BJ (cell line): ENCODE measurements at regions of chr2 and their contacts with region 1.

Region 1: GRCh38 chr2:9333591-9334171 is 89.6 kb downstream of the ITGB1BP1 start:
- DNase-seq: peak; percentile 28
- H3K4me3 ChIP-seq: no peak overlapping the region
- H3K27me3 ChIP-seq: no peaks in the 10 kb centered on the region
- CTCF ChIP-seq: peak; percentile 80

Region 2: DNA sequence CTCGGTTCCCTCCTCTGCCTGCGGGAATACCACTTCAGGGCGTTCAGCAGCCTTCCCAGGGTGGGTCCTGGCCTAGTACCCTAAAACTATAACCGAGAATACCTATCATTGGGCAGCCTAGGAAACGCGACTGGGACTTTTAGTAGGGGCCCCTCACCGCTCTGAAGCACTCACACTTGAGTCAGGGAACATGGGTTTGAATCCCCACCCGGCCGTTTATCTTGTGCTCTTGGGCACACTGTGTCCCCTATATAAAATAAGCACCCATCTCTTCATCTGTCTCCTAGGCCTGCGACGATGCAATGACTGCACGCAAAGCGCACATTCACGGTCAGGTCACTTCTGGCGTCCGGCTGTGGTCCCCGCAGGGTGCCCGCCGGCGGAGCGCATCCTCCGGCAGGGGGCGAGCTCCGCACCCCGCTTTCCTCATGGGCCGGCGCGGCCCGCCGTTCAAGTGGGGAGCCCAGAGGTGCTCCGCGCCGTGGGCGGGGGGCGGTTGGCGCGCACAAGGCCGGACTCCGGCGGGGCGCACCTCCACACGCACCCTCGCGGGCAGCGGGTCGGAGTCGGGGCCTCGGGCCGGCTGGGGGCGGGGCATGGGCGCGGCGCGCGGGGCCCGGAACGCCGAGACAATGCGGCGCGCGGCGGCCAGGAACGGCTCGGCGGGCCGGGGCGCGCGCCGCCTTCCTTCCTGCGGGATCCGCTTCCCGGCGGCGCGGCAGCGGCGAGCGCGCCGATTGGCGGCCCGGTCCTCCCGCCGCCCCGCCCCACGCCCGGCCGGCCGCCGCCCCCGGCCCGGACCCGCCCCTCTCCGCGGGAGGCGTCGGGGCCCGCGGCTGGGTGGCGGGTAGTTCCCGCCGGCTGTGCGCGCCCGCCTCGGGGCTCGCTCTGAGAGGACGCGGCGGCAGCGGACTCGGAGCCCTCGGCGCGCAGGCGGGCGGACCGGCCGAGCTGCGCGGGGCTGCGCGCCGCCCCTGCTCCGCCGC is 127.4 kb before region 1 on chr2 and contains the start of gene ASAP2:
- CTCF ChIA-PET with region 1: interaction called, 11 read pairs
- POLR2A ChIA-PET with region 1: no interaction called
- DNase-seq: no peak
- H3K4me3 ChIP-seq: peak within 1 kb of the TSS; percentile 85
- H3K27me3 ChIP-seq: no peaks in the 10 kb centered on the region
- CTCF ChIP-seq: peak; percentile 76
- polyA plus RNA-seq, gene ASAP2: 14.1 and 18.2 TPM in 2 replicates

Region 3: GRCh38 chr2:9287400-9288043 is 46.2 kb before region 1 on chr2:
- CTCF ChIA-PET with region 1: interaction called, 11 read pairs
- POLR2A ChIA-PET with region 1: interaction called, 3 read pairs
- DNase-seq: peak; percentile 97
- H3K4me3 ChIP-seq: no peak overlapping the region
- H3K27me3 ChIP-seq: no peaks in the 10 kb centered on the region
- CTCF ChIP-seq: 0 out of 2 replicates have a peak, but pooled peaks have one; percentile 20

Region 4: DNA sequence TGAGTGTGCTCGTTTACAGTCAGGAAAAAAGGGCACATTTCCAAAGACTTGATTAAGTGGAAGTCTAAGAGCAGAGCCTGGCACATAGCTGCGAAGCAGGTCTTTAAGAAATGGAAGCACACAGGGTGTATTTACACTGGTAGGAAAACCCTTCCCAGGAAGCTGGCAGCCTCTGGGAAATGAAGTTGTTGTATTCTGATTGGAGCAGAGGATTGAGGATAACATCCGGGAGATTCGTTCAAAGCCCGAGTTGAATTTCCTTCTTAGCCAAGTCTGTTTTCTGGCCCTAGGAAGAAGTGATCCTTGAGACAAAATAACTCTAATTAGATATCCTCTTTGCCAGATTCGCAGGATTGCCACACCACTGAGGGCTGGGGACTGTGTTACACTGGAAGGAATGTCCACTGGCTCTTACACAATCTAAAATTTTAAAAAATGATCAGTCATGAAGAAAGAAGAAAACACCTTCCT is 13.8 kb after region 1 on chr2:
- CTCF ChIA-PET with region 1: interaction called, 3 read pairs
- POLR2A ChIA-PET with region 1: interaction called, 16 read pairs
- DNase-seq: no peak
- H3K4me3 ChIP-seq: no peak overlapping the region
- H3K27me3 ChIP-seq: no peaks in the 10 kb centered on the region
- CTCF ChIP-seq: no peak

Region 5: DNA sequence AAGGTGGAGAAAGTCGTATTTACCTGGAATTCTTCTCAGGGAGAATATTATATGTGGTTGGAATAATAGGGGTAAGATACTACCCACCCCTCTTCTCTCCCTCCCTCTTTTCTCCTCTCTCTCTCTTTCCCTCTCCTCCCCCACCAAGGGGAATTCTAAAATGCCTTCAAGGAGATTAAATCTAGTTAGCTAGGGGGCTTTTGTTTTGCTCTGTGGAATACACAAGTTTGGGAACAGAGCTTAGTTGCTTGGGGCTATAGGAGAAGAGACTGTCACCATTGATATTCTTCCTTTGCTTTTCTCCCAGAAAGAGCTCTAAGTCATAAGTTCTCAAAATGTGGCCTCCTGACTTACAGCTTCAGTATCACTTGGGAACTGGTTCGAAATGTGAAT is 544.0 kb after region 1 on chr2:
- CTCF ChIA-PET with region 1: no interaction called
- POLR2A ChIA-PET with region 1: no interaction called
- DNase-seq: no peak
- H3K4me3 ChIP-seq: no peak overlapping the region
- H3K27me3 ChIP-seq: no peaks in the 10 kb centered on the region
- CTCF ChIP-seq: no peak

Region 6: DNA sequence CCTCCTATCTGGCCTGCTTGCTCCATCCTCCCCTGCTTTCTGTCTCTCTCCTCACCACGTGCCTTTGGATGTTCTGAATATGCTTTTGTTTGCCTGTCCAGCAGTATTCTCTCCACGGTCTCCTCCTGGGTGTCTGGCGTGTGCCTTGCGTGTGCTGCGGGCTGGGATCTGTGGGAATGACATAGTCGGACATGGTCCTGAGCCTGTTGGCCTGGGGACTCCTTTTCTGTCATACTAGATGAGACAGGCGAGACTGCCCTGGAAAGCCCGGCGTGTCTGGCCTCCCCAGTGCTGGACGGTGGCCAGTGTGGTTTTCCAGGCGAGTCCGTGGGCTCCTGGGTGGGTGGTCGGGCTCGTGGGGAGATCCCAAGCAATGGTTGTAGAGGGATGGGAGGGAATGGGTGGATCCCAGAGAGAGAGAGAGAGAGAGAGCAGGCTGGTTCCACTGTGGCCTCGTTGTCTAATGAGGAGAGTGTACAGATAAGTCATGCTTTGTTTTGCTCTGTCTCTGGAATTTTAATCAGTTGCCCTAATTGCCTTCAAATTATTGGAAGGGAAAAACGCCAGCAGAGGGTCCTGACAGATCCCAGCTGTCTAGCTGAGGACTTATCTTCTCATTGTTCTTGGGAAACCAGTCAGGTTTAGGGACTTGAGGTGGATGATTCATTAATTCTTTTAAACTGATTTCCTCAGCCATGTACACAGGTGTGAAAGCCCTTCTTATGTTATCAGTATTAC is 1027.3 kb after region 1 on chr2:
- CTCF ChIA-PET with region 1: no interaction called
- POLR2A ChIA-PET with region 1: no interaction called
- DNase-seq: no peak
- H3K4me3 ChIP-seq: no peak overlapping the region
- H3K27me3 ChIP-seq: no peaks in the 10 kb centered on the region
- CTCF ChIP-seq: no peak